ENCODE measurements at regions of chr17 and their contacts with region 1.

Region 1: DNA sequence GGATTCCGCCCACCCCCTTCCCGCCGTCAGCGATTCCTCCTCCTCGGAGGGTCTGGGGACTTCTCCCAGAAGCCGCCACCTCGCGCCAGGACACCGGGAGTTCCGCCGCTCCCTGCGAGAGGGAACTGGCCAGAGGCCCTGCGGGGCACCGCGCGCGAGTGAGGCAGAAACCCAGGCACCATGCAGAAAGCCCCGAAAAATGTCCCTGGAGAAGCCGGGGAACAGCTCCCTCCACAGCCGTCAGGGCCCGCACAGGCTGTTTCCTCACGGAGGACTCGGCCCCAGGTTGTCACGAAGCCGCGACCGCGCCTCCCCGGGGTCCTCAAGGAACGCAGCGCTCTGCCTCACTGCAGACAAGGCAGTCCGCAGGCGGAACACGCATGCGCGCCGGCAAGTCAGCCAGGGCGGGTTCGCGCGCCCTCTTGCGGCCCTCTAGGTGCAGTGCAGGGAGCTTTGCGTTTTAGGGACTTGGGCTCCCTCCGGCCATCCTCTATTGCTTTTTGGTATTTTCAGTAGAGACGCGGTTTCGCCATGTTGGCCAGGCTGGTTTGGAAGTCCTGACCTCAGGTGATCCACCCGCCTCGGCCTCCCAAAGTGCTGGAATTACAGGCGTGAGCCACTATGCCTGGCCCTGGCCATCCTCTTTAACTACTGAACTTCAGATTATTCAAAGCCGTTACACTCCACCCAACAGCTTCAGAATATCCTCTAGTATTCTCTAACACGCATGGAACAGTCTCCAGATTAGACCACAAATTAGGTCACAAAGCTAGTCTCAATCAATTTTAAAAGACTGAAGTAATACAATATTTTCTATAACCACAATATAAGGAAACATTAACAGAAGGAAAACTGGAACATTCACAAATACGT is 20.3 kb upstream of the ZNF287 start:
- DNase-seq: peak; percentile 94
- H3K4me3 ChIP-seq: peak overlapping the region; percentile 46 to 66 (median 55)
- H3K27ac ChIP-seq: peak overlapping the region; percentile 69 to 86 (median 80)
- H3K4me1 ChIP-seq: peaks cover 0 to 13% (median 6%) of the 10 kb centered on the region in 4 donors
- H3K27me3 ChIP-seq: no peaks in the 10 kb centered on the region
- CTCF ChIP-seq: peak; percentile 91 to 100 (median 91)
- EP300 ChIP-seq: no peak
- POLR2A ChIP-seq: no peak

Region 2: DNA sequence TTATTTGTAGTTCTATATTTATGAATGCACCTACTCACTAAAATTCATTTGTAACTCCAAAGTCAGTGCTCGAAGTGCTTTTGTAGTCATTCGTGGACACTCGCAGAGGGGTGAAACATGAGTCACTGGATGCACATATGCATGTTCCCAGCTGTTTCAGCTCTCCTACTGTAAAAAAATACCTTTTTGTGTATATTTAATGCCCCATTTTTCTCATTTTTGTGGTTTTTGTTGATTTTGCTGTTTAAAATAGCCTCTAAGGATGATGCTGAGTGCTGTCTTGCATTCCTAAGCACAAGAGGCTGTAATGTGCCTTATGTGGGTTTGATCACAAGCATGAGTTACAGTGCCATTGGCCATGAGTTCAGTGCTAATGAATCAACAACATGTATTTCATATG is 266.7 kb before region 1 on chr17:
- intact Hi-C with region 1: no loop called
- DNase-seq: no peak
- H3K4me3 ChIP-seq: no peak overlapping the region
- H3K27ac ChIP-seq: no peak overlapping the region
- H3K4me1 ChIP-seq: no peaks in the 10 kb centered on the region
- H3K27me3 ChIP-seq: no peaks in the 10 kb centered on the region
- CTCF ChIP-seq: no peak
- EP300 ChIP-seq: no peak
- POLR2A ChIP-seq: no peak

Region 3: DNA sequence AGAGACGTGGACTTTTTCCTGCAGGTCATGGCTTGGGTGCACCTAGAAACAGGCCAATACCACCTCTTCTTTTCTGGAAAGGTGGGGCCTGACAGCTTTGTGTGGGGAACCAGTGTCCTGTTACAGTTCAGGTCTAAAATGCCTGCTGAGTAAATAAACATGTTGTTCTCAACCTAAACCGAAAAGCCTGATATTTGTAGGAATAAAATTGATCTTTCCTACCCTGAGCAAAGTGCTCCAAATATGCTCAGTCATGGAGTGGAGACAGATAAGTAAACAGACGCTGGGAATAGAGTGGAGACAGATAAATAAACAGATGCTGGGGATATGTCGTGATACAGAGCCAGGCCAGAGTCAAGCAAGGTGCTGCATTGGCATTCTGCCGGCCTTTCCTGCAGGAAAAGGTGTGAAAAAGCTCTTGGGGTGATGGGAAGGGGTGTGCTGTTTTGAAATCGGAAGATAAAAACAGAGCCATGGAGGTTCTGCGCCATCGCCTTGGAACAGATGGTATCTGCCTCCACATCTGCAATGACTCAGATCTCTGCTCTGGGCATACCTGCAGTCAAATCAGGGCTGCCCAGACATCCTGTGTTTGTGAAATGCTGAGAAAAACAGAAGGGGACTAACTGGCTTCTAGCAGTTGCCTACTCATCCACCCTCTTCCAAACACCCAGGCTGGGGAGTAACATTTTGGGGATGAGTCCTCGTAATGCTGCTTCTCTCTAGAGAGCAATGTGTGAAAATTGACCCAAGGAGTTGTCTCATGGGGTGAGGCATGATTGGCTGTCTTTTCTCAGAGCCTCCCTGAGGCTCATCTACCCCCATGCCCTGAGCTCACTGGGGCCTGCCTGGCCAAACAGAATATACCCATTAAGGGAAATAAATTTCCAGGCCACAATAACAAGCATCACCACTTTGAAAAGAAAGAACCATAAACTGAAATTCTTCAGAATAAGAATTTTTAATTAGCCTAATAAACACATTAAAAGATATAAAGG is 190.8 kb before region 1 on chr17:
- intact Hi-C with region 1: no loop called
- DNase-seq: no peak
- H3K4me3 ChIP-seq: no peak overlapping the region
- H3K27ac ChIP-seq: no peak overlapping the region
- H3K4me1 ChIP-seq: no peaks in the 10 kb centered on the region
- H3K27me3 ChIP-seq: no peaks in the 10 kb centered on the region
- CTCF ChIP-seq: no peak
- EP300 ChIP-seq: no peak
- POLR2A ChIP-seq: no peak

Region 4: GRCh38 chr17:16537130-16537458 is 52.2 kb before region 1 on chr17:
- intact Hi-C with region 1: loop called (anchors 2 kb)
- DNase-seq: no peak
- H3K4me3 ChIP-seq: no peak overlapping the region
- H3K27ac ChIP-seq: peak overlapping the region; percentile 88 to 91 (median 90)
- H3K4me1 ChIP-seq: peaks cover 0 to 10% (median 0%) of the 10 kb centered on the region in 4 donors
- H3K27me3 ChIP-seq: peaks cover 0 to 3% (median 0%) of the 10 kb centered on the region in 3 donors
- CTCF ChIP-seq: peak in 2 of 4 experiments; percentile 2 to 7
- EP300 ChIP-seq: no peak
- POLR2A ChIP-seq: no peak

Region 5: GRCh38 chr17:16568541-16569357 is 20.6 kb before region 1 on chr17 and contains the start of gene ZNF287:
- intact Hi-C with region 1: loop called (anchors 1 kb)
- DNase-seq: peak; percentile 97
- H3K4me3 ChIP-seq: peak within 1 kb of the TSS; percentile 73 to 77 (median 76)
- H3K27ac ChIP-seq: peak within 1 kb of the TSS; percentile 74 to 84 (median 78)
- H3K4me1 ChIP-seq: peaks cover 0 to 16% (median 6%) of the 10 kb centered on the region in 4 donors
- H3K27me3 ChIP-seq: no peaks in the 10 kb centered on the region
- CTCF ChIP-seq: no peak
- EP300 ChIP-seq: no peak
- POLR2A ChIP-seq: peak in 1 of 2 donors; percentile 36
- total RNA-seq, gene ZNF287: 5.0 to 8.1 (median 7.4) TPM

Region 6: GRCh38 chr17:16653209-16654041 is 64.1 kb after region 1 on chr17 and contains the start of gene ZNF624:
- intact Hi-C with region 1: loop called (anchors 5 kb)
- DNase-seq: peak; percentile 98
- H3K4me3 ChIP-seq: peak within 1 kb of the TSS; percentile 48 to 79 (median 68)
- H3K27ac ChIP-seq: peak within 1 kb of the TSS; percentile 89 to 93 (median 91)
- H3K4me1 ChIP-seq: peaks cover 0 to 20% (median 12%) of the 10 kb centered on the region in 4 donors
- H3K27me3 ChIP-seq: no peaks in the 10 kb centered on the region
- CTCF ChIP-seq: no peak
- EP300 ChIP-seq: peak in 3 of 4 donors; percentile 45 to 88 (median 66)
- POLR2A ChIP-seq: peak; percentile 78 to 89
- total RNA-seq, gene ZNF624: 1.2 to 4.4 (median 2.9) TPM

Region 7: DNA sequence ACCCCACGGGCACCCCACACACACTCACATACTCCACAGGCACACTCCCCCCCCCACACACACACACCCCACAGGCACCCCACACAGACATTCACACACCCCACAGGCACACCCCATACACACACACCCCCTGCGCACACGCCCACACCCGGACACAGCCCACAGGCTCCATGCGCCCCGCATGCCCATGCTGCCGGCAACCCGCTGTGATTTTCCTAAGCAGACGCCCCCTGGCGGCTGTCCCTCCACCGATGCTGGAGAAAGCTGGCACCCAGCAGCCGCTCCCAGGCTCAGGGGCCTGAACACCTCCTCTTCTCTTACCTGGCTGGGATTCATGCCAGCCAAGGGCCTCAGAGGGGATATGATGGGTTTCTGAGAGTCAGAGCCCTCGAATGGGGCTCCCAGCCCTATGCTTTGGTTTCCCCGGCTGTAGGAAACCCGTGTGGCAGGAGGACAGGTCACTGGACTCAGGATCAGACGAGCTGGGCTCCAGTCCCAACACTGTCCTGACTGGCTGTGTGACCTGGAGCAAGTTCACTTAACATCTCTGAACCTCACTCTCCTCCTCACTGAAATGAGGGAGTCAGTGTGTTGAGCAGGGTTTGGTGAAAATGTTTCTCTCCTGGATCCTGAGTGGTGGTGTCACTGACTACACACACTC is 402.1 kb after region 1 on chr17:
- intact Hi-C with region 1: loop called (anchors 5 kb)
- DNase-seq: peak; percentile 85
- H3K4me3 ChIP-seq: no peak overlapping the region
- H3K27ac ChIP-seq: no peak overlapping the region
- H3K4me1 ChIP-seq: peaks cover 0 to 13% (median 9%) of the 10 kb centered on the region in 4 donors
- H3K27me3 ChIP-seq: no peaks in the 10 kb centered on the region
- CTCF ChIP-seq: peak; percentile 23 to 80 (median 68)
- EP300 ChIP-seq: no peak
- POLR2A ChIP-seq: no peak